ENCODE measurements at regions of chr3 and their contacts with region 1.

Region 1: DNA sequence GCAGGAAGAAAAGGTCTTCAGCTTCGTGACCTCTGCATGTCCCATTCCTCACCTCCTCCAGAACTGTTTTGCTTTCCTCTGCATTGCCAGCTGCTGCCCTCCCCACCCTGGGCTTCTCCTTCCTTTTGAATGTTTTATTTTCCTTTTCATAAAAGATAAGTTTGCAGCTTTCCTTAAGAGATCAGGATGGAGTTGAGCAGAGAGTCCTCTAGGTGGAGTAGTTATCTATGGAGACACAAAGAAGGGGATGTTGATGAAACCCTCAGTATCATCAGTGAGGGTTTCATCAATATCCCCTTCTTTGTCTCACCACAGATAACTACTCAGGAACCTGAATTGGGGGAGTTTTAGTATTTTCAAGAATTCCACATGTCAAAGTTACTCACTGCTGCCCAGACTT is 19.0 kb upstream of the SLC25A36 start:
- DNase-seq: peak; percentile 11
- H3K4me3 ChIP-seq: no peak overlapping the region
- H3K27ac ChIP-seq: no peak overlapping the region
- H3K4me1 ChIP-seq: no peaks in the 10 kb centered on the region
- H3K27me3 ChIP-seq: peaks cover 0 to 6% of the 10 kb centered on the region in 2 experiments
- CTCF ChIP-seq: peak in 1 of 2 donors; percentile 24
- POLR2A ChIP-seq: no peak

Region 2: GRCh38 chr3:140953028-140953960 is 30.7 kb after region 1 on chr3:
- CTCF ChIA-PET with region 1: no interaction called
- POLR2A ChIA-PET with region 1: no interaction called
- dilution Hi-C with region 1: no loop called
- intact Hi-C with region 1: loop called (anchors 1 kb)
- DNase-seq: peak; percentile 15
- H3K4me3 ChIP-seq: no peak overlapping the region
- H3K27ac ChIP-seq: no peak overlapping the region
- H3K4me1 ChIP-seq: no peaks in the 10 kb centered on the region
- H3K27me3 ChIP-seq: no peaks in the 10 kb centered on the region
- CTCF ChIP-seq: no peak
- POLR2A ChIP-seq: no peak